Activated CD4-positive, alpha-beta memory T cell treated with anti-CD3 and anti-CD28 coated beads, Interleukin-2, amount 10 ng/mL, durations not matched to agents 7 days and 5 days (primary cell): ENCODE measurements at regions of chr5 and their contacts with region 1.

Region 1: GRCh38 chr5:140244525-140245025 is 58.3 kb downstream of the PFDN1 start:
- DNase-seq: peak; percentile 89
- H3K4me3 Mint-ChIP-seq: no peak overlapping the region
- H3K27ac Mint-ChIP-seq: peak overlapping the region; percentile 60
- H3K4me1 Mint-ChIP-seq: peaks cover 47% of the 10 kb centered on the region
- H3K27me3 Mint-ChIP-seq: no peaks in the 10 kb centered on the region

Region 2: DNA sequence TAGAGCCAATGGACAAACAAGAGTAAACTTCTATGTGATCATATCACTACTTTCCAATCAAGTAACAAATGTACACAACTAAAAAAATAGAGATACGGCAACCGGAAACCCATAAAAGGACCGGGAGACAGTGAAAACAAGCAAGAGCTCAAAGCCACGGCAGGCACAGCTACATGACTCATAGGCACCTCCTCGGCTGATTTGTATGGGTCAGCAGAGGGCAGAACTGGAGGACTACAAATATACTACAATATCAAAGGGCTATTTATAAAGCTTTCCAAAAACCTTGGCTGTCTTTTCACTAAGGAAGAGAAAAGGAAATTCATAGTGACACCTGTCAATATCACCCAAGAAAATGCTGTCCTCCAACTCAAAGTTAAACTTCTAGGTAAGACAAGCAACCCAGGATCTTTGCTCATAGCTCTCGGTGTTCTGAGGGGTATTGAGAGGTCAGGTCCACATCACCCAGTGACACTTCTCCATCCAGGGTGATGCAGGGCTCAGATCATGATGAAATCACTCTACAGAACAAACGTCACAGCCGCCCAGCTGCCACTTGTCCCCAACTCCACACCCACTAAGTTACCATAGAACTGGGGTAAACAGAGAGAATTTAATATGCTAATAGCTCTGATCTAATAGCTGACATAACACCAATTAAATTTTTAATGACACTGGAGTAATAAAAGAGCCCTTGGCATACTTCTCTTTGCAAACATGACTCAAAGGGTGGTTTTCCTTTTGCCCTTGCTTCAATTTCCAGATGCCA is 17.0 kb after region 1 on chr5:
- CTCF ChIA-PET with region 1: interaction called, 35 read pairs
- POLR2A ChIA-PET with region 1: interaction called, 36 read pairs
- DNase-seq: peak; percentile 62
- H3K4me3 Mint-ChIP-seq: no peak overlapping the region
- H3K27ac Mint-ChIP-seq: peak overlapping the region; percentile 77
- H3K4me1 Mint-ChIP-seq: peaks cover 81% of the 10 kb centered on the region
- H3K27me3 Mint-ChIP-seq: no peaks in the 10 kb centered on the region

Region 3: DNA sequence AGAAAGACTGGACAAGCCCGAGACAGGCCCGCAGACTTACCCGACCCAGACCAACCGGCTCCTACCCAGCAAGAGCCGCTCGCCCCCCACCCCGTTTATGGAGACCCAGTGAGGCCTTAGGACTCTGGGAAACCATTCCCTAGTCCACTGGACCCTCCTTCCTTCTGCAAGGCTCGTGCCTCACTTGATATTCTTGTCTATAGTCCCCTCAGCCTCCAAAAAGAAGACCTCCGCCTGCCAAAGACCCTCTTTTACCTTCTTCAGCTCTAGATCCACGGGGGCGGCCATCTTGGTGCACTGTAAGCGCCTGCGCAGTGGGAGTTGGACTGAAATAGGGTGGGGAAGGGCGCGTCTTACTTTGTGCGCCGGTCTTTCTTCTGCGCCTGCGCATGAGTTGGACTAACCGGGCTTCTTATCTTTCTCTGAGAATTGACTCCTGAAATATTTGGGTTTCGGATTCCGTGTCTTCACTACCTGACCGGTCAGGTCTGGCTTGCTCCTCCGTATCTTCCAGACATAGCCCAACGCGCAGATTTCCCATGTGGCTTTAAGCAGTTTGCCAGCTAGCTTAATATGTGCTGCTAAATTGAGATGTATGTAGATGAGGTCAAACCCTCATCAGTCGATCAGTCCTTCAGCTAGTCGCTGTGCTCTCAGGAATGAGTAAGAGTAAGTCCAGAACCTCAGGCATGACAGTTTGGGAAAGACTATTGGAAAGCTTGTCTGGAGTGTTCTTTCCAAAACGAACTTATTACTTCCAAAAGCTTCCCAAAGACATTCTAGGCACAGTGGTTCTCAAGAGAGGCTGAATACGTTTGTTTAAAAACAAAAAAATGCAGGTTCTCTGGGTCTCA is 58.4 kb after region 1 on chr5 and contains the start of gene PFDN1:
- CTCF ChIA-PET with region 1: interaction called, 28 read pairs
- POLR2A ChIA-PET with region 1: interaction called, 16 read pairs
- DNase-seq: peak; percentile 94
- H3K4me3 Mint-ChIP-seq: peak within 1 kb of the TSS; percentile 92
- H3K27ac Mint-ChIP-seq: peak within 1 kb of the TSS; percentile 80
- H3K4me1 Mint-ChIP-seq: peaks cover 40% of the 10 kb centered on the region
- H3K27me3 Mint-ChIP-seq: peaks cover 6% of the 10 kb centered on the region
- total RNA-seq, gene PFDN1: 52.3 to 55.8 TPM

Region 4: GRCh38 chr5:140351609-140352334 is 107.2 kb after region 1 on chr5:
- CTCF ChIA-PET with region 1: interaction called, 951 read pairs
- POLR2A ChIA-PET with region 1: interaction called, 34 read pairs
- DNase-seq: peak; percentile 60
- H3K4me3 Mint-ChIP-seq: no peak overlapping the region
- H3K27ac Mint-ChIP-seq: peak overlapping the region; percentile 53
- H3K4me1 Mint-ChIP-seq: peaks cover 41% of the 10 kb centered on the region
- H3K27me3 Mint-ChIP-seq: peaks cover 4% of the 10 kb centered on the region

Region 5: DNA sequence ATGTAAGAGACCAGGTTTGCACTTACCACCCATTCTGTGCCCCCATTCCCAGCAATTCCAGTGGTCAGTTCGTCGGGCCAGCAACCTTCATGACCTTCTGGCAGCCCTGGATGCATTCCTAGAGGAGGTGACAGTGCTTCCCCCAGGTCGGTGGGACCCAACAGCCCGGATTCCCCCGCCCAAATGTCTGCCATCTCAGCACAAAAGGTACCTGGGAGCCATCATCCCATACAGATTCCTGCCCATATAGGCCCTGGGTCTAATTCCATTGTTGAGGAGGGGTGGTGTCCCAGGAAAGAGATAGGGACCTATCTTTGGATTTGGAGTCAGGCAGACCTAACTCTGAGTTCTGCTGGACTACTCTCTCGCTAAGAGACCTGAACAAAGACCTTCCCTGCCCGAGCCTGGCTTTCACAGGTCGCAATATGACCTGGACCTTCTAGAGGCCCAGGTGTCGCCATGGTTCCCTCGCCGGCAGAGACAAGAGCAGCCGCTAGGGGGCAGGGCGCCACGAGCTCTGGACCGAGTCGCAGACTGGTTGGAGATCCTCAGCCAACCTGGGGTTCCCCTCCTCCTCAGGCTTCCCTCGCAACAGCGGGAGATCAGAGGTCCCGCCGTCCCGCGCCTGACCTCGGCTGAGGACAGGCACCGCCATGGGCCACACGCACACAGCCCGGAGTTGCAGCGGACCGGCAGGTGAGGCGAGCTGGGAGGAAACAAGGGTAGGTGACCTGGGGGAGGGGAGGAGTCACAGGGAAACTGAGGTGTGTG is 118.5 kb after region 1 on chr5:
- CTCF ChIA-PET with region 1: interaction called, 69 read pairs
- POLR2A ChIA-PET with region 1: interaction called, 3 read pairs
- DNase-seq: peak; percentile 87
- H3K4me3 Mint-ChIP-seq: peak overlapping the region; percentile 71
- H3K27ac Mint-ChIP-seq: no peak overlapping the region
- H3K4me1 Mint-ChIP-seq: peaks cover 12% of the 10 kb centered on the region
- H3K27me3 Mint-ChIP-seq: peaks cover 3% of the 10 kb centered on the region

Region 6: DNA sequence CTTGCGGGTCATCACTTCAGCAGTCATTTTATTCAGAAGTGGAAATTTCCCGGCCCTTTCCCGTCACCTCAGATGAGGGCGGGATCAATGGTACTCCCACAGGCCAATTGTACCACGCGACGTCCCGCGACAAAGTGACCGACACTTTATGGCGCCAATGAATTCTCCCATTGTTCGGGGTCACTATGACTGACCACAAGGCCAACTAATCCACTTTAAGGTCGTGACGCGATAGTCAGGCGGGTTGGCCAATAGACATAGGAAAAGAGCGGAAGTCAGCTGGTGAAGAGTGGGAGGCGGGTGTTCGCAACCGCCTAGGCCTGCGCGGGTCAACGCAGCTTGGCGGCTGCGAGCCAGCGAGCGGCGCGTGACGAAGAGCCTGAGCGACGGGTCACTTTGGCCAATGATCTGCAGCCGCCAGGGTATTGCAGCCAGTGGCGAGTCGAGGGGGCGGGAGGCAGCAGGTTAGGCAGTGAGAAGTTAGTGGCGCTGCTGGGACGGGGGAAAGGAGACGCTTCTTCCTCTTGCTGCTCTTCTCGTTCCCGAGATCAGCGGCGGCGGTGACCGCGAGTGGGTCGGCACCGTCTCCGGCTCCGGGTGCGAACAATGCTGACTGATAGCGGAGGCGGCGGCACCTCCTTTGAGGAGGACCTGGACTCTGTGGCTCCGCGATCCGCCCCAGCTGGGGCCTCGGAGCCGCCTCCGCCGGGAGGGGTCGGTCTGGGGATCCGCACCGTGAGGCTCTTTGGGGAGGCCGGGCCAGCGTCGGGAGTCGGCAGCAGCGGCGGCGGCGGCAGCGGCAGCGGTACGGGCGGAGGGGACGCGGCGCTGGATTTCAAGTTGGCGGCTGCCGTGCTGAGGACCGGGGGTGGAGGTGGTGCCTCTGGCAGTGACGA is 157.0 kb after region 1 on chr5 and contains the start of gene ANKHD1:
- CTCF ChIA-PET with region 1: interaction called, 13 read pairs
- POLR2A ChIA-PET with region 1: interaction called, 4 read pairs
- DNase-seq: peak; percentile 98
- H3K4me3 Mint-ChIP-seq: no peak within 1 kb of the TSS
- H3K27ac Mint-ChIP-seq: peak within 1 kb of the TSS; percentile 76
- H3K4me1 Mint-ChIP-seq: peaks cover 34% of the 10 kb centered on the region
- H3K27me3 Mint-ChIP-seq: no peaks in the 10 kb centered on the region
- total RNA-seq, gene ANKHD1: 109 to 122 TPM

Region 7: DNA sequence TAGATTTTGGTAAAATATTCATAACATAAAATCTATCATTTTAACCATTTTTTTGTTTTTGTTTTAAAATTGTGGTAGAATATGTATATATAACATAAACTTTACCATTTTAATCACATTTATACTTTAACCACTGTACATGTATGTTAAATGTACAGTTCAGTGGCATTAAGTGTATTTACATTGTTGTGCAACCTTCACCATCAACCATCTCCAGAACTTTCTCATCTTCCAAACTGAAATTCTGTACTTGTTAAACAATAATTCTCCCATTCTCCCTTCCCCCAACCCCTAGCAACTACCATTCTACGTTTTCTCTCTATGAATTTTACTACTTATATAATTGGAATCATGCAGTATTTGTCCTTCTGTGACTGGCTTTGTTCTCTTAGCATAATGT is 168.7 kb after region 1 on chr5:
- CTCF ChIA-PET with region 1: no interaction called
- POLR2A ChIA-PET with region 1: no interaction called
- DNase-seq: no peak
- H3K4me3 Mint-ChIP-seq: no peak overlapping the region
- H3K27ac Mint-ChIP-seq: no peak overlapping the region
- H3K4me1 Mint-ChIP-seq: peaks cover 13% of the 10 kb centered on the region
- H3K27me3 Mint-ChIP-seq: no peaks in the 10 kb centered on the region